Activated B cell treated with CpG ODN at 0.5 μM for 24 hours (primary cell): ENCODE measurements at regions of chr20 and their contacts with region 1.

Region 1: GRCh38 chr20:1108437-1108920 is 9.9 kb upstream of the PSMF1 start:
- DNase-seq: peak; percentile 36
- ATAC-seq: peak; percentile 78
- H3K4me3 Mint-ChIP-seq: no peak overlapping the region
- H3K27ac Mint-ChIP-seq: no peak overlapping the region
- H3K4me1 Mint-ChIP-seq: peaks cover 4% of the 10 kb centered on the region
- H3K27me3 Mint-ChIP-seq: peaks cover 4% of the 10 kb centered on the region
- CTCF ChIP-seq: no peak

Region 2: DNA sequence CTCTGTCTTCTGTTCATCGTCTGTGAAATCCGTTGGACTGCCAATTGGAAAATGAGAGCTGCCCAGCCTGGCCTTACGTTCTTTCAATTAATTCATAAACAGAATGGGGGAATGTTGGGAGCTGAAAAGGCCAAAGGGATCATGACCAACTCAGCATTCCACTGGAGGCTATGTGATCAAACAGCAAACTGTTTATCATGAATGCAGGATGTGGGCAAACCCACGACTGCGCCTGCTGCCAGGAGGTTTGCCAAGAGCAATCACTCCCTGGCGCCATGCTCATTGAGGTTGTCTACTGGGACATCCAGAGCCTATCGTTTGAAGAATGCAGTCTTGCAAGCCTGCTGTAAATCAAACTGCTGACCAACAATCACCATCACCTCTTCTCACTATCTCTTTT is 293.7 kb after region 1 on chr20:
- CTCF ChIA-PET with region 1: no interaction called
- POLR2A ChIA-PET with region 1: no interaction called
- intact Hi-C with region 1: loop called (anchors 5 kb)
- DNase-seq: no peak
- ATAC-seq: no peak
- H3K4me3 Mint-ChIP-seq: no peak overlapping the region
- H3K27ac Mint-ChIP-seq: no peak overlapping the region
- H3K4me1 Mint-ChIP-seq: peaks cover 18% of the 10 kb centered on the region
- H3K27me3 Mint-ChIP-seq: peaks cover 4% of the 10 kb centered on the region
- CTCF ChIP-seq: no peak